Dendritic cell treated with granulocyte-macrophage colony-stimulating factor and Interleukin-4, amounts not matched to agents 40 ng/mL and 50 ng/mL, for 4 days (primary cell): ENCODE measurements at regions of chr1 and their contacts with region 1.

Region 1: DNA sequence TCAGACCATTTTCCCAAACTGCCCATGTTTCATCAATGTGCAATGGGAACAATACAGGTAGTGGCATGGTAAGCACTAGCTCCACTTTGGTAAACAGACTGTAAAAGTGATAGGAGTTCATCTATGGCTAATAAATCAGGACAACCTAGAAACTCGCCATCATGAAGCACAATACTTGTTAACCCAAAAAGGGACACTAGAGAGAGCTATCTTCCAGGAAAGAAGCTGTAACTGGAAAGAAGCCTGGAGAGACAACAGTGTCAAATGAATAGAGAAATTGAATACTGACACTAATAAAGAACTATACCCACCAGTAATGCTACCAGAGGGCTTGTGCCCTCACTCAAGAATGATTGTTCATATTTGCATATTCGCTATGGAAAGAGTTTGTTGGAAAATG is 164.7 kb upstream of the RGS18 start:
- H3K4me3 Mint-ChIP-seq: no peak overlapping the region
- H3K27ac Mint-ChIP-seq: no peak overlapping the region
- H3K4me1 Mint-ChIP-seq: no peaks in the 10 kb centered on the region
- H3K27me3 Mint-ChIP-seq: no peaks in the 10 kb centered on the region

Region 2: DNA sequence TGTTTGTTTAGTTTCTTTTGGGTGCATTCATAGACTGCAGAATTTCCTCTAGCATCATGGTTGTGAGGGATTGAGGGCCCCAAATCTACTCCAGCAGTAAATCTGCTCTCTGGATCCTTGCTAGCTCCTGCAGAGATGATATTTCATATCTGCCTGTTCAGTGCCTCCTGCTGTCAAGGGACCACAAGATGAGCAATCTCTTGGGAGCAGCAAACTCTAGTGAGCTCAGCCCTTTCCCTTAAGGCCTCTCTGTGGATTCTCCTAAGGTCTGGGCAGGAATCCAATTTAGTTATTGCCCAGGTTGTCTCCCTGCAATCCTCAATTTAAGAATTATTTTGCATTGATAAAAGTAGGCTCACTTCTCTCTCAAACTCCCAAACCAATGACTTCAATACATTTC is 241.6 kb after region 1 on chr1:
- intact Hi-C with region 1: loop called (anchors 5 kb)
- H3K4me3 Mint-ChIP-seq: no peak overlapping the region
- H3K27ac Mint-ChIP-seq: no peak overlapping the region
- H3K4me1 Mint-ChIP-seq: no peaks in the 10 kb centered on the region
- H3K27me3 Mint-ChIP-seq: no peaks in the 10 kb centered on the region

Region 3: DNA sequence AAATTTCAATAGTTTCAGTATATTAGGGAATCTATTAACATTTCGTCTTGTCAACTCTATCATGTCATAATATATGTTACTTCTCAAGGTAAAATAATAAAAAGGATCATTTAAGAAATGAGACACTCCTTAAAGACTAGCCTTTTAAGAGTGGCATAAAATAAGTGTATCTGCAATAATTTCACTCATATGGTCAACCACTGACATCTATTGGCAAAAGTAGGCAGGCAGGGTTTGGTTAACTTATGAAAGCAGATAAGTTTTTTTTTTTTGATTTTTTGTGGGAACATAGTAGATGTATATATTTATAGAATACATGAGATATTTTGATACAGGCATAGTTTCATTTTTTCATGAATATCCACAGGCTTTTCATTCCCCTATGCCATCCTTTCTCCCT is 317.7 kb after region 1 on chr1:
- intact Hi-C with region 1: loop called (anchors 1 kb)
- H3K4me3 Mint-ChIP-seq: no peak overlapping the region
- H3K27ac Mint-ChIP-seq: no peak overlapping the region
- H3K4me1 Mint-ChIP-seq: no peaks in the 10 kb centered on the region
- H3K27me3 Mint-ChIP-seq: no peaks in the 10 kb centered on the region

Region 4: DNA sequence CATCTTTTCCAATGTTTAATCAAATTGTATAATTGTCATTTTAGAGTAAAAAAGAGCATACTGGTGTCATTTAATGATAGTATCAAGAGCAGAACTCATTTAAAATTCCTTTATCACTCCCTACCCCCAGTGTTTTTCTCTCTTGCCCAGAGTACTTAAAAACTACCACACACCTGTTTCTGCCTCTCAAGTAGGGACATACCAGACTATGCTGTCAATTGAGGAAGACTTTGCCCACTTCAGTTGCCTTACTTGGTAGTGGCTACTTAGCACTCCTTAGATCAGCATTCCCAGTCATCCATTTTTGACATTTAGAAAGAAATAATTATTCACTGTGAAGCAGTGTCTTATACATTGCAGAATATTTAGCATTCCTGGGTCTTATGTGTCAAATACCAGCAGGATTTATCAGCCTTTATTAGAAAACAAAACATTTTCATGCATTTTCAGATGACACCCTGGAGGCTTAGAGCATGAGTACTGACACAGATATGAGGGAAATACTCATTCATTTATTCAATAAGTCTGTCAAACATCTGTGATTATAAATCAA is 454.6 kb after region 1 on chr1:
- intact Hi-C with region 1: loop called (anchors 2 kb)
- H3K4me3 Mint-ChIP-seq: no peak overlapping the region
- H3K27ac Mint-ChIP-seq: no peak overlapping the region
- H3K4me1 Mint-ChIP-seq: no peaks in the 10 kb centered on the region
- H3K27me3 Mint-ChIP-seq: no peaks in the 10 kb centered on the region